Heart left ventricle (tissue), 16 donors: ENCODE measurements at regions of chr1 and their contacts with region 1.

Region 1: GRCh38 chr1:8409106-8409505 is 91.2 kb downstream of the SLC45A1 start:
- DNase-seq: no peak
- ATAC-seq: peak in 3 of 4 donors; percentile 50 to 70 (median 59)
- H3K4me3 ChIP-seq: peak overlapping the region in 2 of 12 donors; percentile 10 to 24
- H3K27ac ChIP-seq: peak overlapping the region; percentile 72 to 99 (median 82)
- H3K4me1 ChIP-seq: peaks cover 24 to 99% (median 79%) of the 10 kb centered on the region in 12 donors
- H3K27me3 ChIP-seq: no peaks in the 10 kb centered on the region
- CTCF ChIP-seq: peak in 10 of 12 donors; percentile 34 to 67 (median 47)
- POLR2A ChIP-seq: no peak

Region 2: DNA sequence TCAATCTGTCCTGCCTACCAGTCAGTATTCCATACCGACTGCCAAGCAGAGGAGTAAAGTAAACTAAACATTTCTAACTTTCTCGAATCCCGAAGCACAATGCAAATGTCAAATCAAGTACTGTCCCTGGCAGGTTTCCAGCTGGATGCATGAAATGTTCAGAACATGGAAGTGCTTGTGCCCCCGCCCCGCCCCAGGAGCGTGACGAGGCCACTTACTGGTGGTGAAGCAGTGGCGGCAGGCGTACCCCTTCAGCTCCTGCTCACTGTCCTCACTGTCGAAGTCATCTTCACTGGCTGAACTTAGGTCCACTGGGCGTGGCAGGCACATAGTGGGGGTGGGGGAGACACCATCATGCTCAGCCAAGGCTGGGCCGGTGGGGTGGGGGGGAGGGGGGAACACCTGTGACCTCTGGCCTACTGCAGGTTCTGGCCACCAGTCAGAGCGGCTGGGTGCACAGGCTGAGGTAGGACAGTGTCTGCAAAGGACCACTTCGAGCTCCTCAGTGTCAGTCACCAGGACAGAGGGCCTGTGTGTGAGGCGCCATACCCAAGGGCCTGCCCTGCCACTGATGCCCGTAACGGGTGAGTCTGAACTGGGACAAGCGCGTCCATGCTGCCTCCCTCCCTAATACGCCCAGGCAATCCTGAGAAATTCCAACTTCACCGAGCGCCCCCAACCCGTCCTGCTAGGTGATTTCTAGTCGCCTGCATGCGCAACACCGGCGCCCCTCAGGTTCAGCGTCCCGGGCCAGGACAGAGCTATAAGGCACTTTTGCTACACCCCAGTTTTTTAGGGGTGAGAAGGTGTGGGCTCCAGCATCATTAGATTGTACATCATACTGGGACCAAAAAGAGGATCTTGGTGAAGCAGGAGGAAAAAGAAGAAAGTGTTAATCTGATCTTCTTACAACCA is 44.3 kb before region 1 on chr1:
- intact Hi-C with region 1: loop called in 2 of 10 experiments (anchors 5 to 10 kb)
- DNase-seq: peak; percentile 62 to 86 (median 66)
- ATAC-seq: peak; percentile 41 to 56 (median 53)
- H3K4me3 ChIP-seq: no peak overlapping the region
- H3K27ac ChIP-seq: peak overlapping the region; percentile 36 to 93 (median 76)
- H3K4me1 ChIP-seq: peaks cover 4 to 74% (median 63%) of the 10 kb centered on the region in 12 donors
- H3K27me3 ChIP-seq: no peaks in the 10 kb centered on the region
- CTCF ChIP-seq: no peak
- POLR2A ChIP-seq: no peak

Region 3: DNA sequence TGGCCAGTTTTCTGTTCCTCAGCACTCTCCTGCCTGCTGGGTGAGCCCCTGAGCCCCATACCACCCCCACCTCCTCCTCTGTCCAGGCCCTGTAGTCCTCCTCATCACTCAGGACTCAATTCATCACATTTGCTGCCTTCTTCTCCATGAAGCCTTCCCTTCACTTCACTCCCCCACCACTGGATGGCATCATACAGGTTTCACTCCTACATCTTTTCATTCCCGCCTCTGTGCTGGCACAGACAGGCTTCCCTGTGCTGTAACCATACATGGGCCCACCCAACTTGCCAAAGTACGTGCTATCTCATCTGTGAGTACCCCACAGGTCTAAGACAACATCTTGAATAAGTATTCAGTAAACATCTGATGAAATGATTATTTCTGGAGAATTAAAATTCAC is 34.3 kb before region 1 on chr1:
- intact Hi-C with region 1: loop called in 5 of 10 experiments (anchors 2 to 5 kb)
- DNase-seq: no peak
- ATAC-seq: no peak
- H3K4me3 ChIP-seq: no peak overlapping the region
- H3K27ac ChIP-seq: peak overlapping the region; percentile 44 to 97 (median 90)
- H3K4me1 ChIP-seq: peaks cover 19 to 93% (median 82%) of the 10 kb centered on the region in 12 donors
- H3K27me3 ChIP-seq: no peaks in the 10 kb centered on the region
- CTCF ChIP-seq: peak; percentile 9 to 46 (median 30)
- POLR2A ChIP-seq: no peak